Right lobe of liver (tissue), 6 donors: ENCODE measurements at regions of chr15 and their contacts with region 1.

Region 1: DNA sequence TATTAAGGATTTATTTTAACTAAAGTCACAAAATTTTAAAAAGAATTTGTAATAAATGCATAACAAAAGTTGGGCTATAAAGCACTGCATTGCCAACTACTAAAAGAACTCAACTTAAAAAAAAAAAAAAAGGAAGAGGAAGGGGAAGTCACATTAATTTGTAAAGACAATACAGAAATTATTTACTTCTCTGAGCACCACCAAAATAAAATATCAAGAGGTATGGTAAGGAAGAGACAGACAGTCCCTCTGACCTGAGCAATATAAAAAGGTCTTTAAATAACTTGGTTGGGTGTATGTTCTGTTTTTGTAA is 83.5 kb downstream of the UACA start:
- DNase-seq: no peak
- ATAC-seq: no peak
- H3K4me3 ChIP-seq: no peak overlapping the region
- H3K27ac ChIP-seq: no peak overlapping the region
- H3K4me1 ChIP-seq: no peaks in the 10 kb centered on the region
- H3K27me3 ChIP-seq: no peaks in the 10 kb centered on the region
- CTCF ChIP-seq: no peak
- POLR2A ChIP-seq: no peak

Region 2: GRCh38 chr15:70806992-70807712 is 127.3 kb after region 1 on chr15:
- intact Hi-C with region 1: loop called (anchors 5 to 10 kb)
- DNase-seq: peak; percentile 75 to 80 (median 80)
- ATAC-seq: peak; percentile 84 to 91 (median 86)
- H3K4me3 ChIP-seq: no peak overlapping the region
- H3K27ac ChIP-seq: peak overlapping the region; percentile 35 to 61 (median 52)
- H3K4me1 ChIP-seq: peaks cover 0 to 15% (median 0%) of the 10 kb centered on the region in 4 donors
- H3K27me3 ChIP-seq: no peaks in the 10 kb centered on the region
- CTCF ChIP-seq: no peak
- POLR2A ChIP-seq: no peak

Region 3: DNA sequence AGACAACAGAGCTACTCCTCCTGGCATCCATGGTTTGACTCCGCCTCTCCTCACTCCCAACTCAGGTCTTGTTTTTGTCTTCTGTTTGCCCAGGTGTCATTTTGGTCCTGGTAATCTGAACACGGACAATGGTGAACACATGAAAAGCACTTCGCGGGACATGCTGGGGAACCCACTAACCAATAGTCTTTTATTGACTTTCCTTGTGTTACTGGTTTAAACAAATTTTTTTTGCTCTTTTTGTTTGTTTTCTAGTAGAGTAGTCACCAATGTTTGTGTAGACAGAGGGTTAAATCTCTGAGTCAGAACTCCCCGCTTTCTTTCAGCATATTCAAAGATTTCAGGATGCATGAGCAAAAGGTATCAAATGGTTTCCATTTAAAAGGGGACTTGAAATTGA is 135.8 kb after region 1 on chr15:
- intact Hi-C with region 1: loop called in 1 of 2 experiments (anchors 10 kb)
- DNase-seq: no peak
- ATAC-seq: no peak
- H3K4me3 ChIP-seq: no peak overlapping the region
- H3K27ac ChIP-seq: no peak overlapping the region
- H3K4me1 ChIP-seq: peaks cover 0 to 6% (median 0%) of the 10 kb centered on the region in 4 donors
- H3K27me3 ChIP-seq: no peaks in the 10 kb centered on the region
- CTCF ChIP-seq: no peak
- POLR2A ChIP-seq: no peak

Region 4: DNA sequence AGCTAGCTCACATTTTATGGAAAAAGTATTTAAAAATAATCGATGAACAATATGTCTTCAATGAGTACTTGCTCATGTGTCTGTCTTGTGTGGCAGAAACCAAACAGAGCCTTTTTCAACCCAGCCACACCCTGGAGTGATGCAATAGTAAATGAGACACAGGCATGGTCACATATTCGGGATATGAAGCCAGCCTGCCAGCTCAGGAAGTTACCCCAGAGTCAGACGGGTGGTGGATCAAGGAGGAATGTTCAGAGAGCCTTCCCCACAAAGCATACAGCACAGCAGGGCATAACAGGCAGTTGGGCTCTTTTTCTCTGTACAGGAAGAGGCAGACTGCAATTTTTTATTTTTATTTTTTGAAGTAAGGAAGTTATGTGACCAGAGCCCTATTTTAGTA is 146.8 kb after region 1 on chr15:
- intact Hi-C with region 1: no loop called
- DNase-seq: peak in 2 of 3 donors; percentile 44 to 59
- ATAC-seq: peak; percentile 62 to 76 (median 70)
- H3K4me3 ChIP-seq: no peak overlapping the region
- H3K27ac ChIP-seq: no peak overlapping the region
- H3K4me1 ChIP-seq: peaks cover 0 to 25% (median 11%) of the 10 kb centered on the region in 4 donors
- H3K27me3 ChIP-seq: no peaks in the 10 kb centered on the region
- CTCF ChIP-seq: no peak
- POLR2A ChIP-seq: peak; percentile 28